ENCODE measurements at regions of chr13 and their contacts with region 1.

Region 1: DNA sequence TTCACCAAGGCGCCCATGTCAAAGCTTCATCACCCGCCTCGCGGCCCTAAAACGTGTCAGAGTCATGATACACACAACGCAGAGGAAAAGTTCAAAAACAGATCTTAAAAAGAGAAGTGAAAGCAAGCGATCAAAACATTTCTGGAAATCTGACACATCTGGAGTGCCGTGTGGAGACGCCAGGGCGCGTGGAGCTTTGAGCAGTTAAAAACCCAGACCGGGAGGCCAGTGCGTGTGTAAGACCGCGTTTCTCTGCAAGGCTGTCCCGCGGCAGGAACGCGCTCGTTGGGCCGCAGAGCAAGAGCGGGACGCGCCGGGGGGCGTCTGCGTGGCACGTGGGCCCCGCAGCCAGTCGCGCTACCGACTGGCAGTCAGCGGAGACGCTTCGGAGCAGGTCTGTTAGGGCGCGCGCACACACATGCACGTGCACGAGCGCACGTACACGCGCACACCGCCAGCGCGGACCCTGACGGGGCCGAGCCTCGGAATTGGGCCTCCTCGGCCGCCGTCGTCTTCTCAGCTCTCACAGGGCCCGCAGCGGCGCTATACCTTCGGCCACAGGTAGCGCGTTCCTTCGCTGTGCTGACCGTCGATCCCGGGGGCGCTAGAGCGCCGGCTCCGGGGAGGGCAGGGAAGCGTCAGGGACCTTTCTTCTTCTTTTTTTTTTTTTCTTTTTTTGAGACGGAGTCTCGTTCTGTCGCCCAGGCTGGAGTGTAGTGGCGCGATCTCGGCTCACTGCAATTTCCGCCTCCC is 35.8 kb downstream of the RNF6 start:
- DNase-seq: peak; percentile 71 to 83
- ATAC-seq: peak; percentile 85 to 87
- H3K4me3 ChIP-seq: peak overlapping the region; percentile 67 to 86 (median 80)
- H3K27ac ChIP-seq: peak overlapping the region; percentile 73 to 86 (median 80)
- H3K4me1 ChIP-seq: peaks cover 0 to 7% of the 10 kb centered on the region in 2 donors
- H3K27me3 ChIP-seq: no peaks in the 10 kb centered on the region
- CTCF ChIP-seq: peak in 4 of 5 experiments; percentile 29 to 61 (median 44)
- POLR2A ChIP-seq: no peak

Region 2: GRCh38 chr13:26221721-26222519 is 35.6 kb after region 1 on chr13 and contains the start of gene RNF6:
- in situ Hi-C with region 1: no loop called
- intact Hi-C with region 1: loop called (anchors 1 kb)
- DNase-seq: peak; percentile 94 to 96
- ATAC-seq: peak; percentile 99
- H3K4me3 ChIP-seq: peak within 1 kb of the TSS; percentile 89 to 100 (median 94)
- H3K27ac ChIP-seq: peak within 1 kb of the TSS; percentile 93 to 99 (median 96)
- H3K4me1 ChIP-seq: peaks cover 15 to 24% of the 10 kb centered on the region in 2 donors
- H3K27me3 ChIP-seq: no peaks in the 10 kb centered on the region
- CTCF ChIP-seq: peak in 2 of 5 experiments; percentile 24 to 25
- POLR2A ChIP-seq: peak; percentile 63 to 67
- total RNA-seq, gene RNF6: 28.6 to 36.1 (median 32.2) TPM

Region 3: GRCh38 chr13:26325876-26326275 is 139.6 kb after region 1 on chr13:
- in situ Hi-C with region 1: no loop called
- intact Hi-C with region 1: loop called (anchors 5 kb)
- DNase-seq: no peak
- ATAC-seq: peak; percentile 58 to 63
- H3K4me3 ChIP-seq: no peak overlapping the region
- H3K27ac ChIP-seq: peak overlapping the region; percentile 75 to 79 (median 78)
- H3K4me1 ChIP-seq: peaks cover 49 to 61% of the 10 kb centered on the region in 2 donors
- H3K27me3 ChIP-seq: no peaks in the 10 kb centered on the region
- CTCF ChIP-seq: no peak
- POLR2A ChIP-seq: no peak

Region 4: GRCh38 chr13:26425443-26426358 is 239.4 kb after region 1 on chr13:
- in situ Hi-C with region 1: no loop called
- intact Hi-C with region 1: no loop called
- DNase-seq: no peak
- ATAC-seq: no peak
- H3K4me3 ChIP-seq: no peak overlapping the region
- H3K27ac ChIP-seq: no peak overlapping the region
- H3K4me1 ChIP-seq: no peaks in the 10 kb centered on the region
- H3K27me3 ChIP-seq: no peaks in the 10 kb centered on the region
- CTCF ChIP-seq: no peak
- POLR2A ChIP-seq: no peak

Region 5: GRCh38 chr13:26482451-26483197 is 296.3 kb after region 1 on chr13:
- in situ Hi-C with region 1: loop called in 1 of 4 experiments (anchors 5 kb)
- intact Hi-C with region 1: no loop called
- DNase-seq: peak in 1 of 2 donors; percentile 46
- ATAC-seq: peak in 1 of 2 donors; percentile 39
- H3K4me3 ChIP-seq: peak overlapping the region in 3 of 4 donors; percentile 3 to 29 (median 20)
- H3K27ac ChIP-seq: no peak overlapping the region
- H3K4me1 ChIP-seq: no peaks in the 10 kb centered on the region
- H3K27me3 ChIP-seq: no peaks in the 10 kb centered on the region
- CTCF ChIP-seq: peak; percentile 58 to 80 (median 66)
- POLR2A ChIP-seq: no peak

Region 6: GRCh38 chr13:26502826-26503225 is 316.5 kb after region 1 on chr13:
- in situ Hi-C with region 1: loop called in 3 of 4 experiments (anchors 5 to 10 kb)
- intact Hi-C with region 1: no loop called
- DNase-seq: peak; percentile 37 to 63
- ATAC-seq: peak; percentile 55 to 66
- H3K4me3 ChIP-seq: no peak overlapping the region
- H3K27ac ChIP-seq: no peak overlapping the region
- H3K4me1 ChIP-seq: no peaks in the 10 kb centered on the region
- H3K27me3 ChIP-seq: no peaks in the 10 kb centered on the region
- CTCF ChIP-seq: no peak
- POLR2A ChIP-seq: no peak

Region 7: DNA sequence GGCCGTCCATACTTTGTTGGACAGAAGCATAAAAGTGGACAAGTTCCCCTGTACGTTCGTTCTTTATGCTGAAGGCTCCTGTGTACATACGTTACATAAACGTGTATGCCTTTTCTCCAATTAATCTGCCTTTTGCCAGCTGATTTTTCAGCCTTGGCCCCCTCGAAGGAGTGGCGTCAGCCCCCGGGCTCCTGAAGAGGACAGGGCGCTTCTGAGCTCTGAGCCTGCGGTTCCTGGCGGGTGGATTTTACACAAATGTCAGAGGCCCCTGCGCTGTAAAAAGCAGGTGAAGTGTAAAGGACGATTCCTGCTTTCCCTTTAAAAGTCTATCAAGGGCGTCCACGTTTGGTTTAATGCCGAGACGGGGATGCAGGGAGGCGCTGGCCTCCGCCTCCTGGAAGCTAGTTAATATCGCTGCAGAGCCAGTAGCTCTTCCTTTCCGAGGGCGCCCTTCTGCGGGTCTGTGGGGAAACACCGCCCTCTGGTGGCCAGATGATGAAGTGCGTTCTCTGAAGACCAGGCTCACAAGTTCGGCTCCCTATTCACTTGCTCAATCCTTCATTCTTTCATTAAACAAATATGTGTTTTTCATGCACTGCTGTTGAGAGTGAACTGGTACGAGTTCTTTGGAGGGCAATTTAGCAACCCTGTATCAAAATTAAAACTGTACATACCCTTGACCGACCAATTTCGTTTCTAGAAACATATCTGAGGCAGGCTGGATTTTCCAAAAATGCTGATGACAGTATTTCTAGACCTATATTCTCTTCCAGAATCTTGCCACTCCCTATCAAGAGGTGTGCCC is 512.3 kb after region 1 on chr13:
- in situ Hi-C with region 1: loop called in 3 of 4 experiments (anchors 5 to 10 kb)
- intact Hi-C with region 1: loop called (anchors 1 kb)
- DNase-seq: peak; percentile 50 to 74
- ATAC-seq: peak; percentile 85 to 92
- H3K4me3 ChIP-seq: peak overlapping the region in 1 of 4 donors; percentile 12
- H3K27ac ChIP-seq: no peak overlapping the region
- H3K4me1 ChIP-seq: peaks cover 0 to 3% of the 10 kb centered on the region in 2 donors
- H3K27me3 ChIP-seq: no peaks in the 10 kb centered on the region
- CTCF ChIP-seq: peak; percentile 87 to 95 (median 92)
- POLR2A ChIP-seq: no peak

Region 8: DNA sequence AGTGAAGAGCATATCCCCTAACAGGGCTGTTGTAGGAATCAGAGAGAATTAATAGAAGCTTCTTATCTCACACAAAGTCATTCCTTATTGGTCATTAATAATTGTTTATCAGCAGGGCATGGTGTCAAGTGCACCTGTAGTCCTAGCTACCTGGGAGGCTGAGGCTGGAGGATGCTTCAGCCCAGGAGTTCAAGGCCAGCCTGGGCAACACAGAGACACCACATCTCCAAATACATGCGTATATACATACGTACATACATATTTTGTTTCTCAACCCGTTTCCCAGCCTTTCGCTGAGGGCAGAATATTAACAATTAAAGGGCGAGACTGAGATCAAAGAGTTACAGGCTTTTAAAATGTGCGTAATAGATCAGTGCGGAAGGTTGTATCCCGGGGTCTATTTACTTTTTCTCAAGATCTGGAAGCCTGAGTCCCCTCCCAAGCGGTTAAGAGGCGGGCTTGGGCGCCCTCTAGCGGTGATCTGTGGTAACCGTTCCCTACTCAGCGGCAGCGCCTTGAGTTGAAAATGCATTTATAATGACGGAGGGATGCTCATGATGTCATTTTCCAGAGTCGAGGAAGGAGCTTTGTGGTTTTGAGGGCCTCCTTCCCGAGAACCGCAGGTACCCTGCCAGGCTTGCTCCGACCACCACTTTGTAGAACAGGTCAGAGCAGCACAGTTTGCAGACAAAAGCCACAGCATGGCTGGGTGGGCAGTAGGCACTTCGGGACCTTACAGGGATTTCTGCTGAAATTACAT is 743.9 kb after region 1 on chr13:
- in situ Hi-C with region 1: loop called in 2 of 4 experiments (anchors 25 kb)
- intact Hi-C with region 1: no loop called
- DNase-seq: peak in 1 of 2 donors; percentile 15
- ATAC-seq: no peak
- H3K4me3 ChIP-seq: no peak overlapping the region
- H3K27ac ChIP-seq: no peak overlapping the region
- H3K4me1 ChIP-seq: no peaks in the 10 kb centered on the region
- H3K27me3 ChIP-seq: no peaks in the 10 kb centered on the region
- CTCF ChIP-seq: peak; percentile 60 to 91 (median 73)
- POLR2A ChIP-seq: no peak

Measured in gastrocnemius medialis (tissue), 4 donors.